Activated naive CD4-positive, alpha-beta T cell treated with anti-CD3 and anti-CD28 coated beads for 36 hours (primary cell): ENCODE measurements at regions of chr10 and their contacts with region 1.

Region 1: DNA sequence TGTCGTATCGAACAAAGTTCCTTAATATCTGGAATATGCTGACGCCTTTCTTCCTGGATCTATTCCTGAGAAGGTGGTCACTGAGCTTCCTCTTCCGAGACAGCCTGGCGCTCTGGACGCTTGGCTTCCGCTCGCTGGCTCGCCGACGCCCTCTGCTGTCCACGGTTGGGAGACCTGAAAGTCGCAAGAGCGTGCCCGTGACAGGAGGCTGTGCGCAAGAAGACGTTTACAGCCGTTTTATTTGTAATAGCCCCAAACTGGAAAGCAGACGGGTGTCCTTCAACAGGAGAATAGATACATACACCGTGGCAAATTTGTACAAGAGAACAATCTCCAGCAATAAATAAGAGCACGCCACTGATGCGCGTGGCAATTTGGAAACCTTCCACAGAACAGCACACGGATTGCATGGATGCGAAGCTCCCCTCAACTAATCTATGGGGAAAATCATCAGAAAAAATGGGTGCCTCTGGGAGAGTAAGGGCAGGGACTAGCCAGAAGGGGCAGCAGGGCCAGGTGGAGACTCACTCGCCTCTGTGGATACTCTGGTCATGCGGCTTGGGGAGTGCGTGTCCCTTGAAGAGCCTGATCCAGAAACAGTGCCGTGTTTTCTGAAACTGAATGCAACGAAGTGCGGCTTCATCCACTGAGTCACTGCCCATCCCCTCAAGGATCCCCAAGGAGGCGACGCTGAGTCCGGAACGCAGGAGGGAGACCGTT is 41.5 kb upstream of the BNIP3 start:
- DNase-seq: peak; percentile 86
- H3K4me3 Mint-ChIP-seq: no peak overlapping the region
- H3K27ac Mint-ChIP-seq: no peak overlapping the region
- H3K4me1 Mint-ChIP-seq: peaks cover 9% of the 10 kb centered on the region
- H3K27me3 Mint-ChIP-seq: peaks cover 22% of the 10 kb centered on the region

Region 2: DNA sequence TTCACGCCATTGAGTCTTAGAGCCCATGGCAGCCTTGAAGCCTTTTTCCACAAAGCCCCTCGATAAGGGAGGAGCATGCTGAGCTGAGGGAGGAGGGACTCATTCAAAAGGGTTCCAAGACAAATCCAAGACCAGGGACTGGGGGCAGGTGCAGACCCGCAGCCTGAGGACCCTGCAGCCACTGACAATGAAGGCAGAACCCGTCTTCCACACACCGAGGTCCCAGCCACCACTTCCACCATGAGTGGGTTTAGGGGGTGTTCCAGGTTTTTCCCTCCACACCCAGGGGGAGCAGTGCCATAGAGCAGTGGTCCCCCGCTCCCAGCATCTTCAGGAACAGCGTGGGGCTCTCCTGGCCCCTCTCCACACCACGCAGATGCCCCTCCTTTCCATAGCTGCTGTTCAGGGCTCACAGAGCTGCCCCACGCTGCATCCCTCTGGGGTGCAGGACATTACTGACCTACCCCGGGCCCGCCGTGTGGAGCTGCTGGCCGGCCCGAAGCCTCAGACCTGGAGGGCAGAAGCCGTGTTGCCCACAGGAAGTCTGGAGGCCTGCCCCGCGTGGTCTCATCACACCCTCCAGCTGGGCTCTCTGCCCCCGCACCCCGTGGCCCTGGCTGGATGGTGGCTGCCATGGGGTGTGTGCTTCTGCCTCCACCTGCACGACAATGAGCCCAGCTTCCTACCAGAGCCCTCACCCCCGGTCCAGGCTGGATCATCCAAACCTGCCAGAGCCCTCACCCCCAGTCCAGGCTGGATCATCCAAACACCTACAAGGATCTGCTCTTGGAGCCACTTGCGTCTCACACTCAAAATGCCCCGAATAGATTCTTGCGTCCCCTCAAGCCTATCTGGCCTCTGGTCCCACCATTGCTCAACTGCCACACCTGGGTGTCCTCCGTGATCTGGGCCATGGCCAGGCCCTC is 491.7 kb before region 1 on chr10:
- CTCF ChIA-PET with region 1: no interaction called
- intact Hi-C with region 1: no loop called
- DNase-seq: no peak
- H3K4me3 Mint-ChIP-seq: no peak overlapping the region
- H3K27ac Mint-ChIP-seq: no peak overlapping the region
- H3K4me1 Mint-ChIP-seq: no peaks in the 10 kb centered on the region
- H3K27me3 Mint-ChIP-seq: peaks cover 2% of the 10 kb centered on the region

Region 3: GRCh38 chr10:131981429-131982184 is 41.6 kb before region 1 on chr10 and contains the start of gene BNIP3:
- CTCF ChIA-PET with region 1: interaction called, 8 read pairs
- intact Hi-C with region 1: loop called (anchors 1 kb)
- DNase-seq: peak; percentile 94
- H3K4me3 Mint-ChIP-seq: peak within 1 kb of the TSS; percentile 83
- H3K27ac Mint-ChIP-seq: peak within 1 kb of the TSS; percentile 65
- H3K4me1 Mint-ChIP-seq: peaks cover 35% of the 10 kb centered on the region
- H3K27me3 Mint-ChIP-seq: no peaks in the 10 kb centered on the region
- total RNA-seq, gene BNIP3: 55.5 to 55.9 TPM

Region 4: GRCh38 chr10:132001238-132001972 is 21.8 kb before region 1 on chr10:
- CTCF ChIA-PET with region 1: interaction called, 20 read pairs
- intact Hi-C with region 1: no loop called
- DNase-seq: peak; percentile 20
- H3K4me3 Mint-ChIP-seq: no peak overlapping the region
- H3K27ac Mint-ChIP-seq: no peak overlapping the region
- H3K4me1 Mint-ChIP-seq: peaks cover 5% of the 10 kb centered on the region
- H3K27me3 Mint-ChIP-seq: no peaks in the 10 kb centered on the region

Region 5: GRCh38 chr10:132011024-132011423 is 12.2 kb before region 1 on chr10:
- CTCF ChIA-PET with region 1: interaction called, 11 read pairs
- intact Hi-C with region 1: no loop called
- DNase-seq: no peak
- H3K4me3 Mint-ChIP-seq: no peak overlapping the region
- H3K27ac Mint-ChIP-seq: no peak overlapping the region
- H3K4me1 Mint-ChIP-seq: peaks cover 6% of the 10 kb centered on the region
- H3K27me3 Mint-ChIP-seq: no peaks in the 10 kb centered on the region

Region 6: GRCh38 chr10:132142411-132143161 is 119.3 kb after region 1 on chr10:
- CTCF ChIA-PET with region 1: interaction called, 3 read pairs
- intact Hi-C with region 1: loop called (anchors 10 kb)
- DNase-seq: peak; percentile 57
- H3K4me3 Mint-ChIP-seq: no peak overlapping the region
- H3K27ac Mint-ChIP-seq: no peak overlapping the region
- H3K4me1 Mint-ChIP-seq: peaks cover 1% of the 10 kb centered on the region
- H3K27me3 Mint-ChIP-seq: no peaks in the 10 kb centered on the region

Region 7: DNA sequence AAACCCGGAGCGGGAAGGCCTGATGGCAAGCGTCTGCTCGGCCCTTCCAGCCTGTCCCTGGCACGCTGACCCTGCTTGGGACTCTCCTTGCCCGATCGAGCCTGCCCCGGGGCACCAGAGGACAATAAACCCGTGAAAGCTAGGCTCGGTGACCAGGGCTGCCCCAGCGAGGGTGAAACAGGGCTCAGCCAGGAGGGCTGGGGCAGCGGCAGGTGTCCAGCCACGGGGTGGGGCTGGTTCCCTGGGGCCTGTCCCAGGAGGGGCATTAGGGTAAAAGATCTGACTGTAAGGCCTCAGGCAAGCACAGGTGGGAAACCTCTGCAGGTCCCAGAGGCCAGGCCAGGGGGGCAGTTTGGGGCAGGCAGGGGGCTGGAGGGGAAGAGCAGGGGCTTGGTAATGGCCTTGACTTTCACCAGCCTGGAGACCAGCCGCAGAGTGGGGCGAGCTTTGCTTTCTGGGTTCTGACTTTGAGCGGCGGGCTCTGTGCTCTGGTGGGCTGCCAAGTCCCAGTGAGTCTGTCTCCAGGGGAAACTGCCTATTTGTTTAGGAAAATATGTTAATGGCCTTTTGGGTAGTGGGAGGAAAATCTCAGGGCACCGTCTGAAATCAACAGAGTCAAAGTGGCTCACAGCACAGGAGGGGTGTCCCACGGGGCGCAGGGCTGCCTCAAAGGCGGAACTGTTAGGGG is 446.1 kb after region 1 on chr10:
- CTCF ChIA-PET with region 1: no interaction called
- intact Hi-C with region 1: no loop called
- DNase-seq: no peak
- H3K4me3 Mint-ChIP-seq: no peak overlapping the region
- H3K27ac Mint-ChIP-seq: no peak overlapping the region
- H3K4me1 Mint-ChIP-seq: no peaks in the 10 kb centered on the region
- H3K27me3 Mint-ChIP-seq: no peaks in the 10 kb centered on the region